HCT116 (cell line): ENCODE measurements at regions of chr1 and their contacts with region 1.

Region 1: GRCh38 chr1:33094971-33095604 is 14.1 kb downstream of the AZIN2 start:
- DNase-seq: peak; percentile 60
- ATAC-seq: no peak
- H3K4me3 ChIP-seq: no peak overlapping the region
- H3K27ac ChIP-seq: no peak overlapping the region
- H3K4me1 ChIP-seq: peaks cover 17 to 38% of the 10 kb centered on the region in 2 experiments
- H3K27me3 ChIP-seq: no peaks in the 10 kb centered on the region
- CTCF ChIP-seq: peak; percentile 92 to 99 (median 97)
- POLR2A ChIP-seq: no peak
- RAD21 ChIP-seq: peak; percentile 74

Region 2: DNA sequence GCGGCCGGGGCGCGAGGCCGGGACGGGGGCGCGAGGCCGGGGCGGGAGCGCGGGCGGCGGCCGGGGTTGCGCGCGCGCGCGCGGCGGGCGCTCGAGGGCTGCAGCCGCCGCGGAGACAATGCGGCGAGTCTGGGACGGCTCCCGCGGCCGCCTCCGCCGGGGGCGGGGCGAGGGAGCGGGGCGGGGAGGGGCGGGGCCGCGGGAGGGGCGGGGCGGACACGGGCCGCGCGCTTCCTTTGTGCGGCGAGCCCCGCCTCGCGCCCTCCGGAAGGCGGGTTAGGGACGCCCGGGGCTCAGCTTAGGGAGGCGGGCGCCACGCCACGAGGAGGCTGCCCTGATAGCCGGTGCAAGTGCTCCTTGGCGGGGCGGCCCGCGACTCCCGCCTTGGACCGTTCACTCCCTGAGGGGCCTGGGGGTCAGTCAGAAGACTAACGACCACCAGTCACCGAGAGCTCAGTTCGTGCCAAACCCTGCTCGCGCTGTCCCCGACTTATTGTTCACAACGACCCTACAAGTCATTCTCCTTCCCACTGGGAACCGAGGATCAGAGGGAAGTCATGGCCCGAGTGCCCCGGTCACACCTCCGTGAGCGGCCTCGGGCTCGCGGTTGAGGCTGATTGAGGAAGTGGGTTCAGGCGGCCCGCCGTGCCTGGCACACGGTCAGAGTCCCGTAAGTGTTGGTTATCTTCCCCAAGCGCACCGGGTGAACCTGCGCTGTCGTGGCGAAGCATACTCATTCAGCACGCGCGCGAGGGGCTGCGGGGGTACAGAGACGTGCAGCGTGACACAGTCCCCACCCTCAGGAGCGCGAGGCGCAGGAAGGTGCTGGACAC is 254.9 kb after region 1 on chr1:
- CTCF ChIA-PET with region 1: no interaction called
- POLR2A ChIA-PET with region 1: no interaction called
- RAD21 ChIA-PET with region 1: no interaction called
- intact Hi-C with region 1: loop called (anchors 10 kb)
- DNase-seq: peak; percentile 68
- ATAC-seq: peak; percentile 81
- H3K4me3 ChIP-seq: peak overlapping the region; percentile 69 to 70
- H3K27ac ChIP-seq: peak overlapping the region; percentile 85
- H3K4me1 ChIP-seq: peaks cover 25 to 48% of the 10 kb centered on the region in 2 experiments
- H3K27me3 ChIP-seq: no peaks in the 10 kb centered on the region
- CTCF ChIP-seq: no peak
- POLR2A ChIP-seq: no peak
- RAD21 ChIP-seq: no peak

Region 3: DNA sequence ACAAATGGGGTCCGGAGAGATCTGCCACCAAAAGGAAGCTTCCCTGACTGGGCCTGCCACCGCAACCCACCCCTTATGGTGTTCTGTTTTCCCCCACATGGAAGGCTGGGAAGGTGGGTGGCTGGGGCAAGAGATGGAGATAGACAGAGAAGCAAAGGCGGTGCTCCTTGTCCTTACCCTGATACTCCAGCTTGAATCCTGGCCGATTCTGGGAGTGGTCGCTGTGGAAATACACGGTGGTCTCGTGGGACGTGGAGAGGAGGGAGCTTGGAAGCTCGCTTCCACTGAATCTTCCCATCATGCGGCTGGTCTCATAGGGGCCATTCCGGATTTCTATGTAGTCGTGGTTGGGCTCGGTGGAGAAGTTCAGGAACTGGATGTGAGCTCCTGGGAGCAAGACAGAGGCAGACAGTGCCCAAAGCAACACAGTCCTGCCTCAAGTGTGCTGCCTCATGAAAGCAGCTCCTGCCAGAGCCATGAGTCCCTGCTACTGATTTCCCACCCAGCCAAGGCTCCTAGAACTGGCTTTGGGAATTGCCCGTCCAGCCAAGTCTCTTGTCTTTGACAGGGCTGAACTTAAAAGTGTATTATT is 515.9 kb after region 1 on chr1:
- CTCF ChIA-PET with region 1: interaction called, 3 read pairs
- POLR2A ChIA-PET with region 1: no interaction called
- RAD21 ChIA-PET with region 1: no interaction called
- intact Hi-C with region 1: loop called (anchors 5 kb)
- DNase-seq: no peak
- ATAC-seq: no peak
- H3K4me3 ChIP-seq: no peak overlapping the region
- H3K27ac ChIP-seq: no peak overlapping the region
- H3K4me1 ChIP-seq: peaks cover 0 to 5% of the 10 kb centered on the region in 2 experiments; a peak in 1 of 4 replicates
- H3K27me3 ChIP-seq: peaks cover 4% of the 10 kb centered on the region; the same call in 1 of the 2 replicates
- CTCF ChIP-seq: no peak
- POLR2A ChIP-seq: no peak
- RAD21 ChIP-seq: no peak